ENCODE measurements at regions of chr9 and their contacts with region 1.

Region 1: GRCh38 chr9:112112941-112113681 is 62.0 kb downstream of the SUSD1 start:
- DNase-seq: no peak
- H3K4me3 ChIP-seq: no peak overlapping the region
- H3K27ac ChIP-seq: peak overlapping the region; percentile 48
- H3K4me1 ChIP-seq: peaks cover 13% of the 10 kb centered on the region
- H3K27me3 ChIP-seq: no peaks in the 10 kb centered on the region
- CTCF ChIP-seq: peak; percentile 27 to 28
- POLR2A ChIP-seq: no peak

Region 2: DNA sequence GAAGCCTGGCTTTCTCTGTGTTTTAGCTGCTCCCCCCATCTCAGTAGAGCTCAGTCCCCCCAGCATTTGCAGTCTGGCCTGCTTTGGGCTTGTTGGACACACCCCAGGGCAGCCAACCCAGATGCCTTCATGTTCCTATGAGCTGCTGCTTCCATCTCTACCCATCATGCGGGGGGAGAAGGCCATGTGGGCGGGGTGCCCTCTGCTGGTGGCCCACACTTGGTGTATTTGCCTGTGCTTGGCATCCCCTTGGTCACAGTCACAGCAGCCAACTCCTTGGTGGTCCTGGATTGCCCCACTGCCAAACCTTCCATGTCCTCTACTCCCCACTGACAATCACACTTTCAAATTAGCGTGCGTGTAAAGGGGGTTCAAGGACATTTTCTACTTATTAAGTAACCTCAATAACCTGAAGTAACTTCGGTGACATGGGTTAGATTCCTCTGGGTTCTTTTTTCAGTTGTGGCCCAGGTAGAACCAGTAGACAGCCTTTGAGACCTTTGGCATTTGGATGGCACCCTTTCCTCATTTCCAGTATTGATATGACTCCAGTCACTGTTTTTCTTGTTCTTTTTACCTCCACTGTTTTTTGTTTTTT is 680.2 kb after region 1 on chr9:
- CTCF ChIA-PET with region 1: interaction called, 5 read pairs
- POLR2A ChIA-PET with region 1: no interaction called
- dilution Hi-C with region 1: no loop called
- intact Hi-C with region 1: loop called (anchors 10 kb)
- DNase-seq: peak; percentile 57
- H3K4me3 ChIP-seq: no peak overlapping the region
- H3K27ac ChIP-seq: no peak overlapping the region
- H3K4me1 ChIP-seq: no peaks in the 10 kb centered on the region
- H3K27me3 ChIP-seq: no peaks in the 10 kb centered on the region
- CTCF ChIP-seq: peak; percentile 67 to 80
- POLR2A ChIP-seq: no peak